Posterior vena cava (tissue), 2 donors: ENCODE measurements at regions of chr6 and their contacts with region 1.

Region 1: DNA sequence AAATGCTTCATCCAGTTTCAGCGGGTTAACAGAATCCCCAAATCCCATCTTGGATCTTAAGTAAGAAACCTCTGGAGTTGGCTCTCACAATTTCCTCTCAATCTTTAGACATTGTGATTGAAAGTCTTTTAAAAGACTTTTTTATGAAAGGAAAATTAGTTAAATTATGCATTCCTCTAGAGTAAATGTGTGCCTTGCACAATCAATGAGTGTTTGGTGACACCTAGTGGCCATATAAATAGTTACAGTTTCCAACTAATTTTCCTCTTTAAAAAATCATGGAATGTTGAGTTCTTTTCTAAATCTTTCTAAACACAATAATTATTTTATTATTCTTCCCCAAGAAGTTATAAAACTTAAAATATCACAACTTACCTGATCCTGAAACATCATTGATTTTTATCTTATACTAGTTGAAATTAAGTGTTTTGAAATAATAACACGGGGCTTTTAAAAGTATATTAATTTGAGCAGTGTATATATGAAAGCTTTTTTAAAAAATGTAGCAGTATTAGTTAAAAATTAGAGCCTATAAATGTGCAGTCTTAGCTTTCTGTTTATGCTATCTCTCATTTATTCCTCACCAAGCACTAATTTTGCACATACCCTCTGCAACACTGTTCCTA is 66.4 kb downstream of the PKHD1 start:
- DNase-seq: no peak

Region 2: DNA sequence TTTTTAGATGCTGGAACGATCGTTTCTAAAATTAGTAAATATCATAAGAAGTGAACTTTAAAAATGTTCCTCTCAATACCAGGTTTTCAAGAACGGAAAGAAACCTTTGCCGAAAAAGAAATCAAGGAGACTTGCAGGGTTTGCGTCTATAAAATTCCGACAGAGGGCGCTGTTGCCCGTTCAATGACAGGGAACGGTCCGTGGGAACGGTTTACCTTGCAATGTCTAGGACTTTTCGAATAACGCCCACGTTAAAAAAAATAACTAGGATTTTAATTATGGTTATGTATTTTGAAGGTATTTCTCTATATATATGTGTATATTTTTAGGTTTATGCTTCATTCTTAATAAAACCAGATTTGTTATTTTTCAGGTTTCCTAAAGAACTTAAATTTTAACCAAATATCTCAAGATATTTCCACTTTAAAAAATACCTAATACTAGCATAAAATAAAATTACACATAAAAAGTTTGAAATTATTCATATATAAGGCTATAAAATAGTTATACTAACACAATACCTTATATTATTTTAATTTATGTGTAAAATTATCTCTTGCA is 1204.9 kb before region 1 on chr6:
- intact Hi-C with region 1: loop called in 1 of 2 experiments (anchors 10 kb)
- DNase-seq: peak; percentile 82

Region 3: DNA sequence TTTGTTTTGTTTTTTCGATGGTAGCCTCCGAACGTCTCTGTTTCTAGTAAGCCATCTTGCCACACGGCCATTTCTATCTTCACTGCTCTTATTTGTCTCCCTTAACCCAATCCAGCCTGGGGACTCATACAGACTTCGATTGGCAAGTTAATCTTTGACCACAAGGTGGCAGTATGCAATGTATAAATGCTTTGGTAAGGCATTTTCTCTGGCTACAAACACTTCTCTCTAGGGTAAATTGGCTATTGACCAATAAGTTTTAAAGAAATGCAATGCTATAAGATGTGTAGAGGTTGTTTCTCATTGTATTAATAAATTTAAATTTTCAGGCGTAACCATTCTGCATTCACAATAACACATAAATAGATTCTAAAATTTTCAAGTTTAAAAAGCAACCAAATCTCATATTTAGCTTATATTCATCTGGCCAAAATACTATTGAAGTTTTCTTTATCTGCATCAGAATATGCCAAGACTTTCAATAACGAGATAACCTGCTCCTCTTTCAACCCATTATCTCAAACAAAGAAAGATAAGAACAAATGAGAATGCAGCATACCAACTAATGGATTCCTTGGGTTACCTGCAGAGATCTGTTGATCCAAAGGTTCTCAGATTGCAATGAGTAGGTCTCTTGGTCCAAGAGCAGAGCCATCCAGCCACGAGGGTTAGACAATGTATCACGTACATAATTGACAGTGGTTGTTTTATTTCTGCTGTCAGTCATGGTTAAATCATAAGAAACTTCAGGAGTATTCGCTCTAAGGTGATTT is 165.6 kb before region 1 on chr6:
- intact Hi-C with region 1: loop called in 1 of 2 experiments (anchors 10 kb)
- DNase-seq: no peak